ENCODE measurements at regions of chr1 and their contacts with region 1.

Region 1: DNA sequence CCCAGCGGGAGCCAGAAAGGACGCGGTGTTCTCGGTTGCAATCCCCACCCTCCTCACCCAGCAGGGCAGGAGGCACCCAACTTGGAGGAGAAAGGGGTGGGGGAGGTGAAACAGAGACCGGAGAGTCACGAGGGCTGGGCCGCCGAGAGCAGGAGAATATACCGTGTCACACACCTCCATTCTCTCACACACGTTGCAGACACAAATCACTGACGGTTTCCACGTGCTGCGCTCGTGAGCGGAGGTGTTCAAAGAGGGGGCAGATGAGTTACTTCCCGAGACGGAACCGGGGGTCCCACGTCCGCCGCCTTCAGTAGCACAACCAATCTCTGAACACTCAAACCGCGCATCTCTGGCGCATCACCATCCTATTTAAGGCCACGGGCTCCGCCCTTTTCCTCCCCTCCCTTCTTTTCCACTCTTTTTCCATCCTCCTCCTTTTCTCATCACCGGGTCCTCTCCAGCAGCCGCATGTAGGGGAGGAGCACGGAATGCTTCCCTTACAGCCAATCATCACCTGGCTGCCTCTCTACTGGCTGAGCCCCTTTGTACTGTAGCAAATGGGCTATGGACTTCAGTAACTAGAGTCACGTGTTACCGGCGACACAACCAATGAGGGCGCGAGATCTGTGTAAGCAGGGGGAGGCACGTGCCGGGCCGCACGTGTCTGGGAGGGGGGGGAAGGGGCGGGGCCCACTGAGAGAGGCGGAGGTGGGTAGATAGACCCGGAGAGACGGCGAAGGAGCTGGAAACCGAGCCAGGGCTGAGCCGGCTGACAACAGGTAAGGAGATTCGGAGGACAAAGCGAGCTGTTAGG is at the start of gene CIART:
- DNase-seq: peak; percentile 99
- ATAC-seq: peak; percentile 94
- H3K4me3 ChIP-seq: peak within 1 kb of the TSS; percentile 86
- H3K27ac ChIP-seq: peak within 1 kb of the TSS; percentile 77
- H3K4me1 ChIP-seq: peaks cover 19% of the 10 kb centered on the region
- H3K27me3 ChIP-seq: no peaks in the 10 kb centered on the region
- CTCF ChIP-seq: no peak
- total RNA-seq, gene CIART: 19.0 and 27.0 TPM in 2 replicates

Region 2: GRCh38 chr1:150235852-150236613 is 46.0 kb before region 1 on chr1 and contains the start of gene ANP32E:
- CTCF ChIA-PET with region 1: interaction called, 3 read pairs
- POLR2A ChIA-PET with region 1: no interaction called
- intact Hi-C with region 1: loop called (anchors 1 kb)
- DNase-seq: peak; percentile 100
- ATAC-seq: peak; percentile 89
- H3K4me3 ChIP-seq: peak within 1 kb of the TSS; percentile 77
- H3K27ac ChIP-seq: peak within 1 kb of the TSS; percentile 80
- H3K4me1 ChIP-seq: peaks cover 22% of the 10 kb centered on the region
- H3K27me3 ChIP-seq: no peaks in the 10 kb centered on the region
- CTCF ChIP-seq: no peak; the same call in 1 of the 2 replicates
- total RNA-seq, gene ANP32E: 42.0 and 47.4 TPM in 2 replicates

Region 3: GRCh38 chr1:150268705-150269403 is 13.2 kb before region 1 on chr1 and contains the start of gene APH1A:
- CTCF ChIA-PET with region 1: interaction called, 6 read pairs
- POLR2A ChIA-PET with region 1: no interaction called
- intact Hi-C with region 1: loop called (anchors 1 kb)
- DNase-seq: peak; percentile 98
- ATAC-seq: peak; percentile 99
- H3K4me3 ChIP-seq: peak within 1 kb of the TSS; percentile 97
- H3K27ac ChIP-seq: peak within 1 kb of the TSS; percentile 65
- H3K4me1 ChIP-seq: peaks cover 14% of the 10 kb centered on the region
- H3K27me3 ChIP-seq: no peaks in the 10 kb centered on the region
- CTCF ChIP-seq: no peak
- total RNA-seq, gene APH1A: 211 and 222 TPM in 2 replicates

Region 4: DNA sequence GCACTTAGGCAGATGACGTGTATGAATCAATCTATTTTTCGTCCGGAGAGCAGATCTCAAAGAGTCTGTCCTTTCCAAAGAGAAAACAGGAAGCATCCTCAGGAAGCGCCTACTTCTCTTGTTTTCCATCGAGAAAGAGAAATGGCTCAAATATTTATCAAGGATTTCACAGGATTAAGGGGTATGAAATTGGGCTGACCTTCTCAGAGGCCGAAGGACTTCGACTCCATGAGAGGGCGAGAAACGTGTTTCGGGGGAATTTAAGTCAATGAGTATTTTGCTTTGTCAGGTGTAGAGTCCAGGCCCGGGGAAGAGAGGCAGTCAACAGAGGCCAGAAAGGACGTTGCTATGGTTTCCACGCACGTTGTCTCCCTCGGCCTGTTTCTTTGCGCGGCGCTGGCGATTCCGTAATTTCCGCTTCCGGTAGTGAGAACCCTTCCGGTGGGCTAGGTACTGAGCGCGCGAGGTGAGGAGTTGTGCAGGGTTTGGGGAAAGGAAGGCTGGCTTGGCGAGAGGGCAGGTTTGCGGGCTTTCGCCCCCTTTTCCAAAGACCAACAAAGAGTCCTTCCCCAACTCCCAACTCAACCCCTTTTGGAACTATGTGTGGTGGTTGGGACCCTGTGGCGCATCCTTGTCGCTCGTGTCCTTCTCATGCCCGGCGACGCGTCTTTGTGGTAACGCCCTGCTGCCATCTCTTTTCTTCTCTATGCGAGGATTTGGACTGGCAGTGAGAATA is 11.6 kb after region 1 on chr1 and contains the start of gene MRPS21:
- CTCF ChIA-PET with region 1: no interaction called
- POLR2A ChIA-PET with region 1: no interaction called
- intact Hi-C with region 1: loop called (anchors 1 kb)
- DNase-seq: peak; percentile 95
- ATAC-seq: peak; percentile 98
- H3K4me3 ChIP-seq: peak within 1 kb of the TSS; percentile 88
- H3K27ac ChIP-seq: peak within 1 kb of the TSS; percentile 41
- H3K4me1 ChIP-seq: peaks cover 16% of the 10 kb centered on the region
- H3K27me3 ChIP-seq: no peaks in the 10 kb centered on the region
- CTCF ChIP-seq: no peak
- total RNA-seq, gene MRPS21: 109 and 124 TPM in 2 replicates

Region 5: DNA sequence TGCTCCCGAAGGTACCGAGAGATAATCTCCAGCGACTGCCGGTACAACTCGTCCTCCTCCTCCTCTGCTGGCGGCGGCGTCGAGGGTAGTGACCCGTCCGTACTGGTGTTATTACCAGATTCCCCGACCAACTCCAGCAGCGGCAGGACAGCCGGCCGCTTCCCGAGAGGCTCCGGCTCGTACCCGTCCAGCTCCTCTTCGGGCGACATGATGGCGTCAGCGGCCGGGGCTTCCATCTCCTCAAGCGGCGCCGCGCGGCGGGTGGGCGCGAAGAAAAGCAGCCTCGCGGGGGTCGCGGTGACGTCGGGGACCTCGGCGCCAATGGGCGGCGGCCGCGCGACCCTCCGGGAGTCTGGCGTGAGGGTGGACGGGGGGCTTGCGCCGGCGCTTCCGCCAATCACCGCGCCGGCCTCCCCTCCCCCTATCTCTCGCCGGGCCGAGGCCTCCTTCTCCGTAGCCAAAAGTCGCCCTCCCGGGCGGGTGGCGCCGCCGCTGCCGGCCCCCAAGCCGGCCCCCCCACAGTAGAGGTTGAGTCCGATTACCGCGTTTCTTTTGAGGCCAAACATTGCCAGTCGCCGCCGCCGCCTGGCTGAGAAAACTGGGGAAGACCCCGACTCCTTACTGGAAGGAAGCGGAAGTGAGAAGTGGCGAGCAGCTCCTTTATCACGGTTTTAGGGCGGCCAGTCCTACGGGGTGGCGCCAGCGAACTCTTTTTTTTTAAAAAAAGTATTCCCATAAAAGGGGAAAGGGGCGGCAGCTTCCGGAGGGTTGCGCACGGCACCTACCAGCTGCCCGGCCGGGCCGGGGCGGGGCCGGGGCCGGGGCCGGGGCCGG is 297.1 kb after region 1 on chr1 and contains the start of gene MCL1:
- CTCF ChIA-PET with region 1: no interaction called
- POLR2A ChIA-PET with region 1: no interaction called
- intact Hi-C with region 1: no loop called
- DNase-seq: peak; percentile 99
- ATAC-seq: peak; percentile 27
- H3K4me3 ChIP-seq: peak within 1 kb of the TSS; percentile 93
- H3K27ac ChIP-seq: peak within 1 kb of the TSS; percentile 89
- H3K4me1 ChIP-seq: peaks cover 26% of the 10 kb centered on the region
- H3K27me3 ChIP-seq: no peaks in the 10 kb centered on the region
- CTCF ChIP-seq: no peak
- total RNA-seq, gene MCL1: 285 and 376 TPM in 2 replicates

Measured in PC-3 (cell line).